Endothelial cell of umbilical vein (primary cell): ENCODE measurements at regions of chr2 and their contacts with region 1.

Region 1: GRCh38 chr2:230798769-230799399 is 65.9 kb upstream of the ITM2C start:
- DNase-seq: peak; percentile 74
- H3K4me3 ChIP-seq: no peak overlapping the region
- H3K27ac ChIP-seq: no peak overlapping the region
- H3K4me1 ChIP-seq: peaks cover 23% of the 10 kb centered on the region
- H3K27me3 ChIP-seq: no peaks in the 10 kb centered on the region
- CTCF ChIP-seq: peak; percentile 35 to 54
- POLR2A ChIP-seq: no peak

Region 2: DNA sequence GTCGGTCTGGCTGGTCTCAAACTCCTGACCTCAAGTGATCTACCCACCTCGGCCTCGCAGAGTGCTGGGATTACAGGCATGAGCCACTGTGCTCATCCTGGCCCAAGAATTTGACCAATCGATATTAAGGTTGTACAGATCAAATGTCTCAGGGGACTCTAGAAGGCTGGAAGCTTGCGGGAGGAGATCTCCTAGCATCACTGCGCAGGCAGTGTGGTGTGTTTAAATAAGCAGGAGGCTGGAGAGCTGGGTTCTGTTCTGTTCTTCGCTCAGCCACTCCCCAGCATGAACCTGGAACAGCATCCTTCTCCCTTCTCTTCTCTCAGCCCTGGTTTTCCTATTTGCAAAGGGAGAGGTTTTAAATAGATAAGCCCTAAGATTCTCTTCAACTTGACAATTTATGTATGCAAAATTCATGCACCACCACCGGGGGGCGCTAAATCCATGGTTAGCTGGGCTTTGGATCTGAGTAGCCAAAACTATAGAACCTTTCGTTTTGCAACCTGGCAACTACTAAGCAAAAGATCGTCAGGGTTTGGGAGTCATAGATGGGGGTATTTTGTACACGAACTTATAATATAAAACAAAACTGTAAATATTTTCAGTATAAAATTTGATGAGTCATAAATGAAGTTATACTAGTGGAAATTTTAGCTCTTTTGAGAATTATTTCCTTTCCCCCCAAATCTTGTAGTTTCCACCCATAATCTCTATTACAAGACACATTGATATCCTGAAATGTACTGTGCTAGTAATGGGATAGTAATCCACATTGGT is 790.8 kb before region 1 on chr2:
- CTCF ChIA-PET with region 1: no interaction called
- POLR2A ChIA-PET with region 1: no interaction called
- dilution Hi-C with region 1: no loop called
- intact Hi-C with region 1: loop called (anchors 1 kb)
- DNase-seq: peak; percentile 78
- H3K4me3 ChIP-seq: peak overlapping the region in 1 of 3 experiments; percentile 20
- H3K27ac ChIP-seq: no peak overlapping the region
- H3K4me1 ChIP-seq: peaks cover 7% of the 10 kb centered on the region
- H3K27me3 ChIP-seq: no peaks in the 10 kb centered on the region
- CTCF ChIP-seq: peak; percentile 67 to 78
- POLR2A ChIP-seq: no peak

Region 3: DNA sequence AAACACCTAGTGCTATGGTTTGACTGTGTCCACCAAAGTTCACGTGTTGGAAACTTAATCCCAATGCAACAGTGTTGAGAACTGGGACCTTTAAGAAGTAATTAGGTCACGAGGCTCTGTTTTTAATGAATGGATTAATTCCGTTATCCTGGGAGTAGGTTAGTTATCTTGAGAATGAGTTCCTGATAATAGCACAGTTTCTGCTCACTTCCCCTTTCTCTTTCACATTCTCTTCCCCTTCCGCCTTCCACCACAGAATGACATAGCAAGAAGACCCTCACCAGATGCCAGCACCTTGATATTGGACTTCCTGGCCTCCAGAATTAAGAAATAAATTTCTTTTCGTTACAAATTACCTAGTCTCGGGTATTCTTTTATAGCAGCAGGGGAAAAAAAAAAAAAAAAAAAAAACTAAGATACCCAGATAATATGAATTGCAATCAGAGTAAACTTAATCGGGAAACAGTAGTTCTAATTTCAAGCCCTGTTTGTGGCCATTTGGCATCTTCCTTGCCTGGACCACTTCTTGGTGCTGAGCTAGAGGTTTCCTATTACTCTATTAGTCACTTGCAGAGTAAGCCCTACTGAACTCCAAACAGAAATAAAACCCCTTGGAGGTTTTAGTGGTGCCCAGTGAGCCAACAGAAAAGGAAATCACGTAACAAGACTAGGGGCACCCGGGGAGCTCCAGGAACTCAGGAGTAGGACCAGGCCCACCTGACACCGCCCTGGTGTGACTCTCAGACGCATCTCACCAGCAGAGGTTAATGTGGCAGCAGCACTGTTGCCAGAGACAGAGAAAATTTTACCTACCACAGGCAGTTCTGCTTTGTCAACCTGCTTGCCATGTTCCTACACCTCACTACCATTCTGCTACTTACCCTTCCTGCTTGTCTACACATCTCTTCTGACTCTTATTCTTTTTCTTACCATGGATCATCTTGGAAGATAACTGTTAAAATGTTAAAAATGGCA is 233.8 kb before region 1 on chr2:
- CTCF ChIA-PET with region 1: no interaction called
- POLR2A ChIA-PET with region 1: no interaction called
- dilution Hi-C with region 1: no loop called
- intact Hi-C with region 1: no loop called
- DNase-seq: no peak
- H3K4me3 ChIP-seq: no peak overlapping the region
- H3K27ac ChIP-seq: no peak overlapping the region
- H3K4me1 ChIP-seq: no peaks in the 10 kb centered on the region
- H3K27me3 ChIP-seq: peaks cover 0 to 3% of the 10 kb centered on the region in 2 experiments
- CTCF ChIP-seq: no peak
- POLR2A ChIP-seq: no peak

Region 4: DNA sequence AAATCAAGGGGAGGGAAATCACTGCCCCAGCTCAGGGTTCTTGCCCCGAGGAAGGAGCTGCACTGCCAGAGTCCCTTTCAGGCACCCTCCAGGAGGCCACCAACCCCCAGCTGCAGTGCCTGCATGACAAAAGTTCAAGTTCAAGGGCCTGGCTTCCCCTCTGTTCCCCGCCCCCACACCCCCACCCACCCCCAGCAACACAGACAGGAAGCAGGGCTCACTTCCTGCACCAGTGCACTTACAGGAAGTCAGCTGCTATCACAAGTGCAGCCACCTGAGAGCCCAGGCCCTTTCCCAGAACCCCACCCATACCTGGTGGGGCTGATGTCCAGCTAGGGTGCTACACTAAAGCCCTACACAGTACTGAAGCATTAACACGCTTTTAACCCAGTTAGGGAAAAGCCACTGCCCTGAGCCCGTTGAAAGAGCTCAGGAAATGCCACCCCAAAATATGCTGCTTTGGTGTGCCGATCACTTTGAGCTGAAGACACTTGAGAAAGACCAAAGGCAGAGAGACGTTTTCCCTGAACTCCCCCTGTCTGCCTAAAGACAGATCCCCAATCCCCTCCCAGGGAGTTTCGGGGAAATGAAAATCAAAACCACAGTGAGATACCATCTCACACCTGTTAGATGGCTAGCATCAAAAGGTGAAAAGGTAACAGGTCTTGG is 196.2 kb before region 1 on chr2:
- CTCF ChIA-PET with region 1: no interaction called
- POLR2A ChIA-PET with region 1: no interaction called
- dilution Hi-C with region 1: no loop called
- intact Hi-C with region 1: no loop called
- DNase-seq: no peak
- H3K4me3 ChIP-seq: no peak overlapping the region
- H3K27ac ChIP-seq: no peak overlapping the region
- H3K4me1 ChIP-seq: no peaks in the 10 kb centered on the region
- H3K27me3 ChIP-seq: peaks cover 0 to 1% of the 10 kb centered on the region in 2 experiments
- CTCF ChIP-seq: no peak
- POLR2A ChIP-seq: no peak

Region 5: GRCh38 chr2:230684270-230685168 is 114.4 kb before region 1 on chr2:
- CTCF ChIA-PET with region 1: interaction called, 13 read pairs
- POLR2A ChIA-PET with region 1: no interaction called
- dilution Hi-C with region 1: no loop called
- intact Hi-C with region 1: no loop called
- DNase-seq: peak; percentile 41
- H3K4me3 ChIP-seq: no peak overlapping the region
- H3K27ac ChIP-seq: no peak overlapping the region
- H3K4me1 ChIP-seq: peaks cover 9% of the 10 kb centered on the region
- H3K27me3 ChIP-seq: peaks cover 0 to 2% of the 10 kb centered on the region in 2 experiments
- CTCF ChIP-seq: no peak
- POLR2A ChIP-seq: no peak

Region 6: GRCh38 chr2:230712443-230713330 is 86.2 kb before region 1 on chr2 and contains the start of gene CAB39:
- CTCF ChIA-PET with region 1: interaction called, 107 read pairs
- POLR2A ChIA-PET with region 1: interaction called, 6 read pairs
- dilution Hi-C with region 1: no loop called
- intact Hi-C with region 1: loop called (anchors 1 kb)
- DNase-seq: peak; percentile 90
- H3K4me3 ChIP-seq: peak within 1 kb of the TSS; percentile 75 to 94 (median 91)
- H3K27ac ChIP-seq: peak within 1 kb of the TSS; percentile 84
- H3K4me1 ChIP-seq: peaks cover 20% of the 10 kb centered on the region
- H3K27me3 ChIP-seq: peaks cover 0 to 2% of the 10 kb centered on the region in 2 experiments
- CTCF ChIP-seq: peak; percentile 81 to 93
- POLR2A ChIP-seq: peak; percentile 71
- total RNA-seq, gene CAB39: 53.7 and 57.3 TPM in 2 replicates

Region 7: DNA sequence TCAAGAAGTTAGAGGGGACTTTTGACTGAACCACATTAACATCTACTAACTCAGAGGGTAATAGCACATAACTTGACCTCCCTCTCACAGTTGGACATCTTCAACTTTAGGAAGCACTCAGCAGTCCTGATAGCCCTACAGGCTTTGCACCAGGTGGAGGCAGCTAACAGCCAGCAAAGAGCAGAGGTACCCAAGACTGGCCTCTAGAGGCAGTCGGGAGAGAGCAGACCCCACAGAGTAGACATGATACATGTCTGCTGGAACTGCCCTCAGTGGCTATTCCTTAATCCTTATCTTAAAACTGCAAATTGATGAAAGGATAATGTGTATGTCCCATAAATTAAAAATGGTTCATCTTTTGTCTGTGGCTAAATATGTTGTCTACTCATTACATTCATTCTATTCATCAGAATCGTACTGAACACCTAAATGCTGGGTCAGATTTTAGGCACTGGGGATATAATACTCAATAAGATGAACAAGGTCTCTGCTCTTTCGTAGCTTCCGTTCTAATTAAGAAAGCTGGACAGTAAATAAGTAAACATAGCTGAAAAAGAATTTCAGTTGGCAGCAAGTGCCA is 36.5 kb before region 1 on chr2:
- CTCF ChIA-PET with region 1: interaction called, 14 read pairs
- POLR2A ChIA-PET with region 1: interaction called, 6 read pairs
- dilution Hi-C with region 1: no loop called
- intact Hi-C with region 1: loop called (anchors 1 kb)
- DNase-seq: peak; percentile 52
- H3K4me3 ChIP-seq: no peak overlapping the region
- H3K27ac ChIP-seq: no peak overlapping the region
- H3K4me1 ChIP-seq: peaks cover 26% of the 10 kb centered on the region
- H3K27me3 ChIP-seq: no peaks in the 10 kb centered on the region
- CTCF ChIP-seq: peak; percentile 40 to 66
- POLR2A ChIP-seq: no peak

Region 8: DNA sequence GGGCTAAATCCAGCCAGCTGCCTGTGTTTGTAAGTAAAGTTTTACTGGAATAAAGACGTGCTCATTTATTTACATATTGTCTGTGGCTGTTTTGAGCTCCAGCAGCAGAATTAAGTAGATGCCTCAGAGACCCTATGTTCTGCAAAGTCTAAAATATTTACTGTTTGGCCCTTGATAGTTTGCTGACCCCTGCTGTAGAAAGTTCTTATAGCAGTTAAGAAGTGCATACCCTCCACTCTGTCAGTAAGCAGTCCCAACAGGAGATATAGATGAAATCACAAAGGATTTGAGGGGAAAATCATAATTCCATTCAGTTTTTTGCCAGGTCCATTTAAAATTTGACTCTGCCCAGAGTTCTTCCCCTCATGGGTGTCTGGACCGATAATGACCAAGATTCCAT is 15.7 kb after region 1 on chr2:
- CTCF ChIA-PET with region 1: interaction called, 21 read pairs
- POLR2A ChIA-PET with region 1: no interaction called
- dilution Hi-C with region 1: no loop called
- intact Hi-C with region 1: no loop called
- DNase-seq: peak; percentile 35
- H3K4me3 ChIP-seq: no peak overlapping the region
- H3K27ac ChIP-seq: no peak overlapping the region
- H3K4me1 ChIP-seq: no peaks in the 10 kb centered on the region
- H3K27me3 ChIP-seq: no peaks in the 10 kb centered on the region
- CTCF ChIP-seq: peak; percentile 14 to 16
- POLR2A ChIP-seq: no peak